Psoas muscle (tissue), 8 donors: ENCODE measurements at regions of chr1 and their contacts with region 1.

Region 1: GRCh38 chr1:44002606-44003157 is 11.3 kb downstream of the CCDC24 start:
- DNase-seq: no peak
- ATAC-seq: no peak
- H3K4me3 ChIP-seq: no peak overlapping the region
- H3K27ac ChIP-seq: no peak overlapping the region
- H3K4me1 ChIP-seq: peaks cover 4% of the 10 kb centered on the region
- H3K27me3 ChIP-seq: no peaks in the 10 kb centered on the region
- CTCF ChIP-seq: no peak

Region 2: DNA sequence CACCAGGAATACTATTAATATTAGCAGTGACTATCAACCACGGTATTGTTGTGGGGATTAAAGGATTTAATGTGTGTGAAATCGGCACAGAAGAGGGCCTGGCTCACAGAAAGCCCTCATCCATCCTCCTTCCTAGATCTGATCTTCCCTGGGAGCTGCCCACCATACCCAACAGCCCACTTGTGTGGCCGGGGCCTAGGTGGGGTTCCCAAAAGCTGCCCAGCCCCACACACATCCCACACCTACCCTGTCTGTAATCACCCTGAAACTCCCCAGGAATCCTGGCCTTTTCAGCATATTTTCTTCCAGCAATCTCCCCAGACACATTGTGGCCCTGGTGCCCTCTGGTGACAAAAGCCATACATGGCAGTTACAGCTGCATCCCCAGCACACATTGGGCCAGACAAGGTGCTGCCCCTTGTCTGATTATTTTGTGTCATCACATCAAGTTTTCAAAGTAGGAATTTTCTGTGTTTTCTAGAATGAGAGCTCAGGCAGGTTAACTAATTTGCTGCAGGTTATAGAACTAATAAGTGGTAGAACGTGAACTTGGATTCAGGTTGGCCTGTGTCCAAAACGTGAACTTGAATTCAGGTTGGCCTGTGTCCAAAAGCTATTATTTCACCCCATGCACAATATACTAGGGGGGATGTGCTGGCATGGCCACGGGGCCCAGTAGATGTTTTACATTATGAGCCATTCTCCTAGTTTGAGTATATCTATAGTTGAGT is 33.9 kb after region 1 on chr1:
- intact Hi-C with region 1: loop called (anchors 1 to 5 kb)
- DNase-seq: peak; percentile 55 to 74
- ATAC-seq: peak; percentile 76 to 91 (median 81)
- H3K4me3 ChIP-seq: no peak overlapping the region
- H3K27ac ChIP-seq: no peak overlapping the region
- H3K4me1 ChIP-seq: peaks cover 18% of the 10 kb centered on the region
- H3K27me3 ChIP-seq: no peaks in the 10 kb centered on the region
- CTCF ChIP-seq: peak; percentile 73

Region 3: GRCh38 chr1:44049839-44050238 is 47.2 kb after region 1 on chr1:
- intact Hi-C with region 1: loop called (anchors 2 to 5 kb)
- DNase-seq: no peak
- ATAC-seq: no peak
- H3K4me3 ChIP-seq: no peak overlapping the region
- H3K27ac ChIP-seq: no peak overlapping the region
- H3K4me1 ChIP-seq: no peaks in the 10 kb centered on the region
- H3K27me3 ChIP-seq: no peaks in the 10 kb centered on the region
- CTCF ChIP-seq: no peak

Region 4: DNA sequence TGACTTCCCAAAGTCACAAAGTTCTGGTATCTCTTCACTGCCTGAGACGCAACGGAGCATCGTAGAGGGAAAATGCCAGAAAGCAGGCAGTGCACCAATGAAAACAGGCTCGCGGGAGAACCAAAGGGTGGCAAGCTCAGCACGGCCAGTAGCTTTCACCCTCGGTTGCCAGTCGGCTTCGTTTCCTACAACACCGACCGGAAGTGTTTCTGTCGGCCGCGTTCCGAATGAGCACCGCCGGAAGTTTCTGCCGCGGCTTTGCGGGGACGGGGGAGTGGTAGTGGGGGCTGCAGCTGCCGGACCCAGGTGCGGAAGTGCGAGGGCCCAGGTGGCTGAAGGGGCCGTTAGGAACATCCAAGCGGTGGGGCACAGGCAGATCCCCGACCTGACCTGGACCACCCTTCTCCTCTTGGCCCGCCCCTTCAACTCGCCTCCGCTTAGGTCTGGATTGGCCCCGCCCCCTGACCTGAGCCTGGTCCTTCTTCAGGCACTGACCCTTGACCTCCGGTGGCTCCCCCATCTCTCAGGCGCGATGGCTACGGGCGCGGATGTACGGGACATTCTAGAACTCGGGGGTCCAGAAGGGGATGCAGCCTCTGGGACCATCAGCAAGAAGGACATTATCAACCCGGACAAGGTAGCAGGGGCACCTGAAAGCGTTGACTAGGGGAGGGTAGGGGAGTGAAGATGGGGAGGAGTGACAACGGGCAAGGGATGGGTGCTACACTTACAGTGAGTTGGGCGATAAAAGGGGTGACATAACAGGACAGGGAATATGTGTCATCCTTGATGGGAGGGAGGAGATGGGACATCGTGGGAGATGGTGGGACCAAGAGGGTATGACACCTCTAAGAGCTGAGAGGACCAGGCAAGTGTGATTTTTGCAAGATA is 210.8 kb after region 1 on chr1 and contains the start of gene DMAP1:
- intact Hi-C with region 1: no loop called
- DNase-seq: peak; percentile 79 to 91
- ATAC-seq: peak; percentile 92 to 97 (median 94)
- H3K4me3 ChIP-seq: peak within 1 kb of the TSS; percentile 94
- H3K27ac ChIP-seq: peak within 1 kb of the TSS; percentile 78
- H3K4me1 ChIP-seq: peaks cover 10% of the 10 kb centered on the region
- H3K27me3 ChIP-seq: no peaks in the 10 kb centered on the region
- CTCF ChIP-seq: no peak
- total RNA-seq, gene DMAP1: 18.5 to 28.3 (median 23.7) TPM

Region 5: DNA sequence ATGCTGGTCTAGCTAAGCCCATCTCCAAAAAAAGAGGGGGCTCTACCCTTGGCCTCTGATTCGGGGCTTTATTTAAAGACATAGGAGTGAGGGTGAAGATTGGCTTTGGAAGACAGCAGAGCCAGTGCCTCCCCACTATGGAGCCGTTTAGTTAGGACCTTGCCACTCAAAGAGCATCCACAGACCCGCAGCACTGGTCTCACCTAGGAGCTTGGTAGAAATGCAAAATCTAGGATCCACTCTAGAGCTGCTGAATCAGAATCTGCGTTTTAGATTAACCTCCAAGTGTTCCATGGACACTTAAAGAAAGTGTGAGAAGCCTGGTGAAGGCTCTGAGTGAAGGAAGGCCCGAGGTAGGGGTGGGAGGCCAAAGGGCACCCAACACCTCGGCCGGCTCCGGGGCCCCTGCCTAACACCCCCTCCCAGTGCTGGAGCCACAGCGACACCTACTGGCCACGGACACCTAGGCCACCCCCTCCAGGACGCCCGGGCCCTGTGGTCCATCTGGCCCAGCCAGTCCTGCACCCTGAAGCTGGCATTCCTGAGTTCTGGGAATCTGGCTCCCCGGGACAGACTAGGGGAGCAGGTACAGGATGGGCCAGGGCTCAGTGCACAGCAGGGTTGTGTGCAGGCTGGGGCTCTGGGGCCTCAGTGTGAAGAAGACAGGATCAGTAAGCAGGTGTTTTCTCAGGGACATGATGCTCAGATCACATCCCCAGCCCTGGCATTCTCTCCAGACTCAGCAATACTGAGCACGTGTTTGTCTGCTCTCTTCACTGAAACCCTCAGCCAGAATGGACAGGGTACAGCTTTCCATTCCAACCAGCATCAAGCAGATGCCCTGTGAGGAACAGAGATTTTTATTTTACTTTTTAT is 592.4 kb after region 1 on chr1:
- intact Hi-C with region 1: loop called (anchors 10 kb)
- DNase-seq: peak; percentile 79 to 90
- ATAC-seq: peak; percentile 88 to 98 (median 92)
- H3K4me3 ChIP-seq: no peak overlapping the region
- H3K27ac ChIP-seq: no peak overlapping the region
- H3K4me1 ChIP-seq: no peaks in the 10 kb centered on the region
- H3K27me3 ChIP-seq: peaks cover 0 to 7% (median 2%) of the 10 kb centered on the region in 3 donors
- CTCF ChIP-seq: peak; percentile 95